Testis (tissue), 5 donors: ENCODE measurements at regions of chr1 and their contacts with region 1.

Region 1: DNA sequence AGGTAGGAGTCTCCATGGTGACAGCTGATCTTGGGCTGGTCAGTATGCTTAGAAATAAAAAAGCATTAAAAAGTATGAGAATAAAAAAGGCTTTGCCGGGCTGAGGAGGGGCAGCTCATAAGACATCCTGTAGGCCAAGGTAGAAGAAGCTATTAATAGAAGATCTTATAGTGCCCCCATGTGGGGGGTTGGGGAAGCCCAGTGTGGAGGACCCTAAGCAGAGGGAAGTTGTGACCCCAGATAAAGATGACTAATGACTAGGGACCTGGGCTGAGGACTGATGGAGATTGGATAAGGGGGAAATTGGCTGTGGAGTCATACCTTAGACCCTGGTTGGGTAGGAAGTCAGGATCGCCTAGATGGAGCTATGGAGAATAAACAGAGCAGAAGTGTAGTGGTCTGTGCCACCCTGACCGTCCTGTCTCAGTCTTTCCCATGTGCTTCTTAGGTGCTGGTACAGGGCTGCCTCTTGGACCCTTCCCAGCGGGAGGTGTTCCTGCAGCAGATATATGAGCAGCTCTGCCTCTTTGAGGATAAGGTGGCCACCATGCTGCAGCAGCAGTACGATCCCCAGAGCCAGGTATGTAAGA is 25.0 kb downstream of the SZT2 start:
- DNase-seq: peak; percentile 64
- H3K4me3 ChIP-seq: no peak overlapping the region
- H3K27ac ChIP-seq: no peak overlapping the region
- H3K4me1 ChIP-seq: no peaks in the 10 kb centered on the region
- H3K27me3 ChIP-seq: no peaks in the 10 kb centered on the region
- CTCF ChIP-seq: peak; percentile 25 to 46 (median 40)
- POLR2A ChIP-seq: no peak

Region 2: GRCh38 chr1:43238085-43238484 is 176.6 kb before region 1 on chr1:
- intact Hi-C with region 1: loop called (anchors 10 kb)
- DNase-seq: peak; percentile 83
- H3K4me3 ChIP-seq: no peak overlapping the region
- H3K27ac ChIP-seq: no peak overlapping the region
- H3K4me1 ChIP-seq: peaks cover 7% of the 10 kb centered on the region
- H3K27me3 ChIP-seq: no peaks in the 10 kb centered on the region
- CTCF ChIP-seq: peak in 2 of 3 experiments; percentile 28 to 53
- POLR2A ChIP-seq: no peak